Activated CD4-positive, alpha-beta T cell treated with anti-CD3 and anti-CD28 coated beads for 36 hours (primary cell): ENCODE measurements at regions of chr19 and their contacts with region 1.

Region 1: DNA sequence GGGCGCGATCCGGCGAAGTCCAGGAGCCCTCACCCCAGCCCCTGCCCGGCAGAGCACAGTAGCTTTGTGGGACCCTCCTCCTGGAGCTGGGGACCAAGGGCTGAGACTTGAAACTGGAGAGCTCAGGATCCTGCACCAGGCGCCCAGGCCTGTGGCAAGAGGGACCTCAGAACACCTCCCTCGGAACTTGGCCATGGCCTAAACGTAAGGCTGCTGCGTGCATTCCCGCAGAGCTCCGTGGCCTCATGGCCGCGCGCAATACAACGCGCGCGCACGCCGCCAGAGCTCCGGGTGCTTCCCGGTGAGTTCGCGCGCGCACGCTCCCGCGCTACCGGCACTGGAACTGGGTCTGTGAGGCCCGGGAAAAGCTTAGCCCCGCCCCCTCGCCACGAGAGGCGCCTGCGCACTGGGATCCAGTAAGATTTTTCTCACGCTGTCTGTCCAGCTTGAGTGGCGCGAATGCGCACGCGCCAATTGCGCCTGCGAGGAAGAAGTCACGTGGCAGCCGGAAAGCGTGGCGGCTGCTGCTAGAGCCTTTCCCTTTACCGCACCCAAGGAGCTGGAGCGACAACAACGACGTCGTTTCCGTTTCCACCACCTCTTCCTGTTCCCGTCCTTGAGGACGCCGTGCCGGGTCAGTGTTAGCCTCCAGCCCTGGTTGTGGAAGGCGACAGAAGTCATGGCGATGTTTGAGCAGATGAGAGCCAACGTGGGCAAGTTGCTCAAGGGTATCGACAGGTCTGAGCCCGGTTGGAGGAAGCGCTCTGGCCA is at the start of gene EIF3K:
- DNase-seq: peak; percentile 99
- ATAC-seq: peak; percentile 74
- H3K4me3 Mint-ChIP-seq: peak within 1 kb of the TSS; percentile 100
- H3K27ac Mint-ChIP-seq: peak within 1 kb of the TSS; percentile 99
- H3K4me1 Mint-ChIP-seq: peaks cover 44% of the 10 kb centered on the region
- H3K27me3 Mint-ChIP-seq: no peaks in the 10 kb centered on the region
- total RNA-seq, gene EIF3K: 269 to 297 TPM

Region 2: DNA sequence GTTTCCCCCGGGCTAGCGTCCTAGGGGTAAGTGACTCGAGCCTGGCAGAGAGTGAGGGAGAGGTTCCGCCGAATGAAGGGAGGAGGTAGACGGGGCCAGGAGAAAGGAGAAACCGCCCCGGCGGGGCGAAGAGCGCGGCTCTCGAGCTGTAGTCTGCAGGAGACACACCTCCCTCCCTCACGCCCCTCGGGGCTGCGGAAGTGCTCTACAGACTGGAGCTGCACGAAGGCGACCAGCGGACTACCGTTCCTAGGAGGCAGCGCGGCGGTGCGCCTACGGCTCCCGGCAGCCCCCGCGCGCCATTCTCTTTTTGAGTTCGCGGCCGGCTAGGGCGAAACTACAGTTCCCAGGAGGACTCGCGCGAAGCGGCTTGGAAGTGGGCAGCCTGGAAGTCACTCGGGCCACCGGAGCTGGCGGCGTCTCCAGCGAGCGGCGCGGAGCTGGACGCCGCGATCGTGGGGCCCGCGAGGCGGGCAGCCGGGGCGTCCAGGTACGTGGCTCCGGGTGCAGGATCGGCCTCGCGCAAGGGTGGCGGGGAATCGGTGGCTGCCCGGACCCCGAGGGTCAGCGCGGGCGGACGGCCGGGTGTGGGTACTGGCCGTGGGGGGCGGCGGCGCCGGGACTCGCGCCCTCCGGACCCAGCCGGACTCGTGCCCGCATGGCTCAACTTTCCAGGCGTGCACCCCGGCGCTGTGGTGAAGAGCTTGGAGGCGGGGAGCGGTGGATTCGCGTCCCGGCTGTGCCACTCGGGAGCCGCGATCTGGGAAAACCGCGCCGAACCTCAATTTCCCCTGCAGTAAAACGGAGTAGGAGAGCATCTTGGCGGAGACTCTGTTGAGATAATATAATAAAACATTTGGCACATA is 711.7 kb before region 1 on chr19 and contains the start of gene SIPA1L3:
- CTCF ChIA-PET with region 1: no interaction called
- POLR2A ChIA-PET with region 1: no interaction called
- intact Hi-C with region 1: loop called in 1 of 2 experiments (anchors 1 kb)
- DNase-seq: peak; percentile 97
- ATAC-seq: peak; percentile 98
- H3K4me3 Mint-ChIP-seq: peak within 1 kb of the TSS; percentile 73
- H3K27ac Mint-ChIP-seq: peak within 1 kb of the TSS; percentile 74
- H3K4me1 Mint-ChIP-seq: peaks cover 20% of the 10 kb centered on the region
- H3K27me3 Mint-ChIP-seq: no peaks in the 10 kb centered on the region
- total RNA-seq, gene SIPA1L3: 10.5 to 18.3 TPM

Region 3: DNA sequence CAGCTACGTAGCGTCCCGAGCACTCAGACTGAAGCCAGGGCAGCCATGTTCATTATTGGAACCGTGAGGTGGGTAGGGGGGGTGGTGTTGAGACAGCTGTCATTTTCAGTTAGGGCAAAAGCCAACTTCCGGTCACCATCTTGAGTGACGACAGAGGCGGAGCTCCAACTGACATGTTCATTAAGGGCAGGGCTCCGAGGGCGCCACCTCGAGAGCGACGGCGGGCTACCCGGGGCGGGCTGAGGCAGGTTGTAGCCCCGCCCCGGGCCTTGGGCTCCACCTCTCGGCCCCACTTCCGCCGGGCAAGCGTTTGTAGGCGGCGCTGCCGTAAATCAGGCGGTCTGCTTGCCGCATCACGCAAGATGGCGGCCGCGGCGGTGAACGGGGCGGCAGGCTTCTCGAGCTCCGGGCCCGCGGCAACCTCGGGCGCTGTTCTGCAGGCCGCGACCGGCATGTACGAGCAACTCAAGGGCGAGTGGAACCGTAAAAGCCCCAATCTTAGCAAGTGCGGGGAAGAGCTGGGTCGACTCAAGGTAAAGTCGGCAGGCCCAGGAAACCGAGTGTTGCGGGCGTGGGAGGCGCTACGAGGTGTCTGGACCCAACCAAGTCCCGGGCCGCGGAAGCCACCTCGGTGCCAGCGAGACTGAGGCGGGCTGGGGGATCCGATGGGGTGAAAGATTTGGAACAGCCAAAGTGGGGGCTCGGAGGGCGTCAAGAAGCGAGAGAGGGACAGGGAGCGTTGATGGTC is 244.2 kb before region 1 on chr19 and contains the start of gene PSMD8:
- CTCF ChIA-PET with region 1: no interaction called
- POLR2A ChIA-PET with region 1: no interaction called
- intact Hi-C with region 1: loop called (anchors 1 kb)
- DNase-seq: peak; percentile 99
- ATAC-seq: peak; percentile 99
- H3K4me3 Mint-ChIP-seq: peak within 1 kb of the TSS; percentile 97
- H3K27ac Mint-ChIP-seq: peak within 1 kb of the TSS; percentile 98
- H3K4me1 Mint-ChIP-seq: peaks cover 26% of the 10 kb centered on the region
- H3K27me3 Mint-ChIP-seq: peaks cover 5% of the 10 kb centered on the region
- total RNA-seq, gene PSMD8: 219 to 275 TPM

Region 4: DNA sequence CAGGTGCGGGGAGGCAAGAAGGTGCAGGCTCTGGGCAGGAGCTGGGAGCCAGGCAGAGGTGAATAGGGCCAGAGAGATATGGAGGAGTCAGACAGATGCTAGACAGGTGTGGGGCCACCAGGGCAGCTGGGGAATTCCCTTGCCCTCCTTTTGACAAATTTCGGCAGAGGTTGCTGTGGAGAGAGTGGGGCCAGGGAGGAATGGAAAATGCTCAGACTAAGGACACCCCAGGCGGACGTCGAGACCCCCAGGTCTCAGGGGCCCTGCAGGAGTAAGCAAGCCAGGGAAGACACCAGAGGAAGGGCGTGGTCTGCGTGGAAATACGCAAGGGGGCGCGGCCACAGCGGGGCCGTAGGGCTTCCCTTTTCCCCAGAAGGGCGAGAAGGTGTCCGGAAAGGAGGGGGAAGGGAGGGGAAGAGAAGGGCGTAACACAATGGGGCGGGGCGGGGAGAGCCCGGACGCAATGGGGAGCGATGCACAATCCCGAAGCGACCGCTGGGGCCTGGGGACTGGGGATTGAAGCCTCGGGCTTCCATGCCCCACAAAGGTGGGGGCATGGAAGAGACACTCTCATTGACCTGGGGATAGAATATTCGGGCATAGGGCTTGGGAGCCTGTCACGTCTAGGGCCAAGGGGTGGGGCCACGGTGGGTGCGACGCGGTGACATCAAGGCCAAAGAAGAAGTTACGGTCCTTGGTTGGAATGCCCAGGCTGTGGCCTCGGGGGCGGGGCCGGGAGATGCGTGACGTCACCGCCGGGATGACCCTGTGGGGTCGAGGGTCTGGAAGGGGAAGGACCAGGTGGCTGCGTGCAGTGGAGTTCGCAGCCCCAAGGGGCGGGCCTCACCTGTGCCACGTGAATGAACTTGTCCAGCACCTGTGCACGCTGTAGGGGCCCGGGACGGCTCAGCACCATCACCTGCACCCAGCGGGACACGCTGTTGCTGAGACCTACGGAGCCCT is 200.9 kb before region 1 on chr19:
- CTCF ChIA-PET with region 1: no interaction called
- POLR2A ChIA-PET with region 1: no interaction called
- intact Hi-C with region 1: loop called in 1 of 2 experiments (anchors 5 kb)
- DNase-seq: peak; percentile 80
- ATAC-seq: peak; percentile 93
- H3K4me3 Mint-ChIP-seq: peak overlapping the region; percentile 75
- H3K27ac Mint-ChIP-seq: peak overlapping the region; percentile 23
- H3K4me1 Mint-ChIP-seq: peaks cover 26% of the 10 kb centered on the region
- H3K27me3 Mint-ChIP-seq: no peaks in the 10 kb centered on the region

Region 5: DNA sequence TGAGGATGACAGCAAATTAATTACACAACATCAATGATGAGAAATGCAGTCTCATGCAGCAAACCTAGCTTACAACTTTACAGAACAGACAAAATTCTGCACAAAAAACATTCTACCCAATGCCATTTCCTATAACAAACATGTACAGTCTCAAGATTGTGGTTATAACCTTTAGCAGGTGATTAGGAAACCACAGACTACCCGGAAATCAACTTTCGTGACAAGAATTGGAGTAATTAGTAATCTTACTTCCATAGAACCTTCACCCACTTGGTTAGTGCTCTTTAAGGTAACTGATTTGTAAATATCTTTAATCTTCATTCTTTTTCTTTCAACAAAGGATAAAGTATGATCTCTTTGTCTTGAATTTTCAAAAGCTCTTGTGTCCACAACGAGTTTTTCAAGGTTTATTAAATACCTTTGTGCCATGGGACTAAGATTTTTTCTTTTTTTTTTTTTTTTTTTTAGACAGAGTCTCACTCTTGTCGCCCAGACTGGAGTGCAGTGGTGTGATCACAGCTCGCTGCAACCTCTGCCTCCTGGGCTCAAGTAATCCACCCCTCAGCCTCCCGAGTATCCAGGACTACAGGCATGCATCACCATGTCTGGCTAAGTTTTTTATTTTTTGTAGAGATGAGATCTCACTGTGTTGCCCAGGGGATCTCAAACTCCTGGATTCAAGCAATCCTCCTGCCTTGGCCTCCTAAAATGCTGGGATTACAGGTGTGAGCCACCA is 79.8 kb before region 1 on chr19:
- CTCF ChIA-PET with region 1: interaction called, 16 read pairs
- POLR2A ChIA-PET with region 1: no interaction called
- intact Hi-C with region 1: loop called (anchors 1 kb)
- DNase-seq: peak; percentile 49
- ATAC-seq: peak; percentile 87
- H3K4me3 Mint-ChIP-seq: peak overlapping the region; percentile 36
- H3K27ac Mint-ChIP-seq: peak overlapping the region; percentile 89
- H3K4me1 Mint-ChIP-seq: peaks cover 41% of the 10 kb centered on the region
- H3K27me3 Mint-ChIP-seq: no peaks in the 10 kb centered on the region

Region 6: GRCh38 chr19:38647368-38647965 is 28.7 kb after region 1 on chr19 and contains the start of gene ACTN4:
- CTCF ChIA-PET with region 1: interaction called, 4 read pairs
- POLR2A ChIA-PET with region 1: interaction called, 12 read pairs
- intact Hi-C with region 1: loop called (anchors 1 kb)
- DNase-seq: peak; percentile 100
- ATAC-seq: peak; percentile 92
- H3K4me3 Mint-ChIP-seq: peak within 1 kb of the TSS; percentile 98
- H3K27ac Mint-ChIP-seq: peak within 1 kb of the TSS; percentile 81
- H3K4me1 Mint-ChIP-seq: peaks cover 39% of the 10 kb centered on the region
- H3K27me3 Mint-ChIP-seq: peaks cover 10% of the 10 kb centered on the region
- total RNA-seq, gene ACTN4: 181 to 182 TPM

Region 7: DNA sequence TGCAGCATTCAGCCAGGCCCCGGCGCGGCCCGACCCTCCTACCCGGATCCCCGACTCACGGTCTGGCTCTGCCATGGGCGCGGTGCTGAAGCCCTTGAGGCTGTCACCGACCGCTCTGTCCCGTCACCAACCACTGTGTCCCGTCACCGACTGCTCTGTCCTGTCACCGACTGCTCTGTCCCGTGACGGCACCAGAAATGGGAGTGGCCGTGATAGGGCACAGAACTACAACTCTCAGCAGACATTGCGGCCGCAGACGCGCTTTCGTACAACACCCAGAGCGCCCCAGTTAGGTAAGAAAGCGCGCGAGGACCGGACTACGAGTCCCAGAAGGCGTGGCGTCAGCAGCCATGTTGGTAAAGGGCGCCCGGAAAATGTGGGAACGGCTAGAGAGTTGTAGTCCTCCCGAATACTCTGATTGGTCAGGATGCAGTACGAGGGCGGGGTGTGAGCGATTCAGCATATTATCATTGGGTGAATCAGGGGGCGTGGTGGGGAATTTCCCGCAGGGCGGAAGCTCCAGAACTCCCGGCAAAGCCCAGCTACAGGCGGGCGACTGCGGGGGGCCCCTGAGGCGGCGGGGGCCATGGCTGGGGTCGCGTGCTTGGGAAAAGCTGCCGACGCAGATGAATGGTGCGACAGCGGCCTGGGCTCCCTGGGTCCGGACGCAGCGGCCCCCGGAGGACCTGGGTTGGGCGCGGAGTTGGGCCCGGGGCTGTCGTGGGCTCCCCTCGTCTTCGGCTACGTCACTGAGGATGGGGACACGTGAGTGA is 280.9 kb after region 1 on chr19 and contains the starts of genes NFKBIB and SIRT2:
- CTCF ChIA-PET with region 1: no interaction called
- POLR2A ChIA-PET with region 1: no interaction called
- intact Hi-C with region 1: loop called in 1 of 2 experiments (anchors 1 kb)
- DNase-seq: peak; percentile 100
- ATAC-seq: peak; percentile 93
- H3K4me3 Mint-ChIP-seq: peak within 1 kb of the TSS; percentile 88
- H3K27ac Mint-ChIP-seq: peak within 1 kb of the TSS; percentile 91
- H3K4me1 Mint-ChIP-seq: peaks cover 40% of the 10 kb centered on the region
- H3K27me3 Mint-ChIP-seq: no peaks in the 10 kb centered on the region
- total RNA-seq, gene NFKBIB: 49.4 to 52.5 TPM
- total RNA-seq, gene SIRT2: 17.8 to 23.1 TPM